ENCODE measurements at regions of chr16 and their contacts with region 1.

Region 1: DNA sequence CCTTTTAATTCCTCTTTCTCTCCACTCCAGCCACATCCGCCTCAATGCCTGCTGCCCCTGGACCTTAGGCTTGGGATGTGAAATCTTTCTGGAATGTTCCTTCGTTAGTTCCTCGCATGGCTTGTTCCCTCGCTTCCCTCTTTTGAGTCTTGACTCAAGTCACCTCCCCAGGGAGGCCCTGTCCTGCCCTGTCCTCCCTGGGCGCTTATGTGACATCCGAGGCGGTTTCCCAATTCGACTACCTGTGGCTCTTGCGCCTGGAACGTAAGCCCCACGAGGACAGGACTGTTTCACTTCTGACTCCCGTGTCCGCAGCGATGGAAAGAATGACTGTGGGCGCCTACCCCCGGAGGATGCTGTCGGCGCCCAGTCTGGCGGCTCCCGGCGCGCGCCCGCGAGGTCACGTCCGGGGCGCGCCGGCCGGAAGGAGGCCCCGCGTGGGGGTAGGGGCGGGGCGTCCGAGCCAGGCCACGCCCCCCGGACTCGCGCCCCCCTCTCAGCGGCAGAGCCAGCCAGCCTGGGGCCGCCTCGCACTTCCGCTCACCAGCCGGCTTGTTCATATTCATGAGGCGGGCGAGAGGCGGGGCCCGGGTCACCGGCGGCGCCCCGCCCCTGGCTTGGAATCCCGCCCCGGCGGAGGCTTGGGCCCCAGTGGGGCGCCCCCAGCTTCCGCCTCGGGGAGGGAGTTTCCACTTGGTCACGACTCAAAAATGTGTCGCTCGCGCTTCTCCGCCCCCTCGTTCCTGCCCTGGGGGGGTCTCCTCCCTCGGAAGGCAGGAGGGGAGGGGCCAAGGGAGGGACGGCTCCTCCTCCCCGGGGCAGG is 8.4 kb upstream of the GLIS2 start:
- DNase-seq: peak; percentile 99
- ATAC-seq: peak; percentile 93
- H3K4me3 Mint-ChIP-seq: peak overlapping the region; percentile 95
- H3K27ac Mint-ChIP-seq: peak overlapping the region; percentile 97
- H3K4me1 Mint-ChIP-seq: peaks cover 23% of the 10 kb centered on the region
- H3K27me3 Mint-ChIP-seq: peaks cover 14% of the 10 kb centered on the region

Region 2: DNA sequence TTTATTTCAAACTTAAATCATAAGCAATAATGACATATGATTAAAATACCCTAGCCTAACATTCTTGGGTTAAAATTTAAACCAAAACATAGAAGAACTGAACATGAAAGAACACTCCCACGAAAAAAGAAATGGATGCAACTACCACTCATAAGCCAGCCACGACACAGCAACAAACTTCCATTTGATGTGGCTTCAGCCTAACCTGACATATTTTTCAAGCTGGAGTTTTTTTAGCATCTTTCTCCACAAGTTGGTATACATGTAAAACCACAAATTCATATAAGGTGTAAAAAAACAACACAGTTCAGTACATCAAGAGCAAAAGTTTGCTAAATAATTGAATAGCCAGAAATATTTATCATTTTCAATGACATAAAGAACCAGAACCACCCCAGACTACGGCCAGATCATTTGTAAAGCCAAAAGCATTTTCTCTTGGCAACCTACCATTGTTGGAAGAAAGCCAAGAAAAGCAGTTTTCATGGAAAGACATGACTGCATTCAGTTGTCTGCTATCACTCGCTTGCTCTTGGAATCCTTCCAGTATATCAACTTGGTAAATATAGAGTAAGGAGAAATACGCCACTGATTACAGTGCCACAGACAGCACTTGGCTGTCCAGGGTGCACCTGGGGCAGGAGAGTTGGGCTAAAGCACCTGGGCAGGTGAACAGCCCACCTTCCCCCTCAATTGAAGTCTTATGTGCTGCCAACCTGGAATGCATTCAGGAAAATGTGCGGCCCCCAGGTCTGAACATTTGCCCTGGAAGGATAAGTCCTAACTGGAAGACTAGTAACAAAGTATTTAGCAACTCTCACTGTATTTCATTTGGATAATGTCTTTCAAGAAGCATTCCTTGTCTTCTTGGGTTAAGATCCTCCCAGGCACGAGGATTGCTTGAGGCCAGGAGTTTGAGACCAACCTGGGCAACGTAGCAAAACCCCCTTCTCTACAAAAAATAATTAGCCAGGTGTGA is 487.4 kb before region 1 on chr16:
- POLR2A ChIA-PET with region 1: no interaction called
- DNase-seq: no peak
- ATAC-seq: no peak
- H3K4me3 Mint-ChIP-seq: peak overlapping the region; percentile 23
- H3K27ac Mint-ChIP-seq: no peak overlapping the region
- H3K4me1 Mint-ChIP-seq: peaks cover 68% of the 10 kb centered on the region
- H3K27me3 Mint-ChIP-seq: peaks cover 6% of the 10 kb centered on the region

Region 3: GRCh38 chr16:4328046-4328503 is 20.6 kb after region 1 on chr16:
- POLR2A ChIA-PET with region 1: interaction called, 10 read pairs
- DNase-seq: peak; percentile 68
- ATAC-seq: peak; percentile 75
- H3K4me3 Mint-ChIP-seq: peak overlapping the region; percentile 40
- H3K27ac Mint-ChIP-seq: no peak overlapping the region
- H3K4me1 Mint-ChIP-seq: no peaks in the 10 kb centered on the region
- H3K27me3 Mint-ChIP-seq: peaks cover 9% of the 10 kb centered on the region

Measured in activated naive CD8-positive, alpha-beta T cell treated with anti-CD3 and anti-CD28 coated beads, Interleukin-2, amount 10 ng/mL, durations not matched to agents 7 days and 5 days (primary cell).